Common myeloid progenitor, CD34-positive (primary cell): ENCODE measurements at regions of chr10 and their contacts with region 1.

Region 1: DNA sequence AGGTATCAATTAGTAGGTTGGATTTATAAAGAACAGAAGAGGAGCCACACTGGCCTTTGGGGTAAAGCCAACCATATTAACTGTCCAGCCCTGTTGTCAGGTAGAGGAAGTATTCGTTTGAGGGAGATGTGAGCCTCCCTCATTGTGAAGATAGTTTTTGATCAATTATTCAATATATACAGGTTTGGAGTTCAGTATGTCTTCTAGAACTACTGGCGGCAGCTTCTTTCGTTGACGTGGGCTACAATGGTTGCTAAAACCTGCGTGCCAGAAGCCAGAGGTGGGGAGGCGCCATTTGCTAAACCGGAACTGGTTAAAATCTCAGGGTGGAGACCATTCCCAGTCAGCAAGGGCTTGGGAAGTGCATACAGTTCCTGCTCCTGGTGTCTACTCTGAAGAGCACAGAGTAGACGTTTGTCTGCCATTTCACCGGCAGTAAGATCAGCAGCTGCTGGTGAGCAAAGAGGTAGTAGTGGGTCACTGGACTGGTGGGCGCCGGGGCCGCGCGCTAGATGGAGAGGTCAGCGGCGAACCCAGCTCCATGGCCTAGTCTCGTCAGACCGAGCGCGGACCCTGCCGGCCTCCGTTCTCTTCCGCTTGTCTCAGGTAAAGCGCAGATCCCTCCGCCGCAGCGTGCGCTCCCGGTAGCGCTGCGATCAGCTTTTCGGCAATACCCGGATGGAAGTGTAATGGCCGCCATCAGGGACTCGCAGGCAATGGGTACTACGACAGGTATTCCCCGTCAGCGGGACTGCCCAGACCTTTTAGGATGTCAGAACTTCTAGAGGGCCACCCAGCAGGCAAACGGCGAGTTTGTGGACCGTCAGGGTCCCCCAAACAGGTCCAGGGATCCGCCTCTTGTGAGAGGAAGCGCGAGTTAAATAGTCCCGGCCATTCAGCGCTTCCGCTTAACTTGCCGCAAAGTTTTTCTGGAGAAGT is at the start of gene ZNF518A:
- DNase-seq: peak; percentile 98 to 99 (median 98)
- H3K4me3 ChIP-seq: peak within 1 kb of the TSS; percentile 73 to 99 (median 95)
- H3K27ac ChIP-seq: peak within 1 kb of the TSS; percentile 99 to 100
- H3K4me1 ChIP-seq: peaks cover 6 to 21% (median 12%) of the 10 kb centered on the region in 4 experiments
- H3K27me3 ChIP-seq: peaks cover 0 to 41% (median 18%) of the 10 kb centered on the region in 5 experiments

Region 2: GRCh38 chr10:96089670-96090462 is 39.8 kb before region 1 on chr10:
- CTCF ChIA-PET with region 1: interaction called, 7 read pairs
- POLR2A ChIA-PET with region 1: interaction called, 17 read pairs
- DNase-seq: peak; percentile 98
- H3K4me3 ChIP-seq: peak overlapping the region; percentile 82 to 99 (median 93)
- H3K27ac ChIP-seq: peak overlapping the region; percentile 95 to 97
- H3K4me1 ChIP-seq: peaks cover 0 to 9% (median 6%) of the 10 kb centered on the region in 4 experiments
- H3K27me3 ChIP-seq: peaks cover 0 to 30% (median 9%) of the 10 kb centered on the region in 5 experiments

Region 3: GRCh38 chr10:96112531-96112930 is 17.1 kb before region 1 on chr10:
- CTCF ChIA-PET with region 1: no interaction called
- POLR2A ChIA-PET with region 1: no interaction called
- DNase-seq: no peak
- H3K4me3 ChIP-seq: no peak overlapping the region
- H3K27ac ChIP-seq: no peak overlapping the region
- H3K4me1 ChIP-seq: no peaks in the 10 kb centered on the region
- H3K27me3 ChIP-seq: peaks cover 0 to 54% (median 8%) of the 10 kb centered on the region in 5 experiments